GM12878 (cell line): ENCODE measurements at regions of chr7 and their contacts with region 1.

Region 1: GRCh38 chr7:43625453-43625852 is 42.5 kb downstream of the STK17A start:
- DNase-seq: no peak
- ATAC-seq: peak; percentile 88
- H3K4me3 ChIP-seq: no peak overlapping the region
- H3K27ac ChIP-seq: peak overlapping the region; percentile 25; the same call in 1 of the 2 replicates
- H3K4me1 ChIP-seq: peaks cover 28% of the 10 kb centered on the region
- H3K27me3 ChIP-seq: no peaks in the 10 kb centered on the region
- CTCF ChIP-seq: no peak
- EP300 ChIP-seq: peak; percentile 8 to 67; a peak in 3 of 4 replicates
- POLR2A ChIP-seq: no peak
- RAD21 ChIP-seq: no peak

Region 2: DNA sequence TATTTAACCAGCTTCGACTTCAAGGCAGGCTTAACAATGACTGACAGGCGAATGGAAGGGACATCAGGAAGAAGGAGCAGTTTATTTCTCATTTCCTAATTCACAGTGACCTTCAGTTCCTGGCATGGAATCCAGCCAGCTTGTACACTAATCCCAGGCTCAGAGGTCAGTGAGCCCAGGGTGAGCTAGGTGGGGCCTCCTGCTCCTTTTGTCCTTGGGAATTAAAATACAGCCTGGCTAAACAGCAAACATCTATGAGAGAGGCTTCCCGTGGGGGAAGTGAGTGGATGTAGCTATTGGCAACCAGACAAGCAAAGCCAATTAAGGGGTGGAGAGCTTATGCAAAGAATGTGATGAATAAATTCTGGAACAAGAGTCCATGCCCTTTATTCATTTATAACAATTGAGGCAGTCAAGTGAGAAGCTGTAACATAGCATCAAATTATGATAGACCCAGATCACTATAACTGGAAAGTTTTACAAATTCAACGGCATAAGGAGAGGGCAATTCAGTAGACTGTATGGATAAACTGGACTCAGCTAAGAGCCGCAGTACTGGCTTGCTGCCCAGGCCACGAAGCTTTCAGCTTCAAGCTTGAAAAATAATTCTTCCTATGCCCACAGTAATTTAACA is 14.5 kb after region 1 on chr7:
- CTCF ChIA-PET with region 1: interaction called, 12 read pairs
- POLR2A ChIA-PET with region 1: interaction called, 7 read pairs
- RAD21 ChIA-PET with region 1: interaction called, 13 read pairs
- SMC1A ChIA-PET with region 1: interaction called, 146 read pairs
- in situ Hi-C with region 1: no loop called
- intact Hi-C with region 1: no loop called
- DNase-seq: no peak
- ATAC-seq: no peak
- H3K4me3 ChIP-seq: no peak overlapping the region
- H3K27ac ChIP-seq: no peak overlapping the region
- H3K4me1 ChIP-seq: no peaks in the 10 kb centered on the region
- H3K27me3 ChIP-seq: no peaks in the 10 kb centered on the region
- CTCF ChIP-seq: no peak
- EP300 ChIP-seq: no peak
- POLR2A ChIP-seq: no peak
- RAD21 ChIP-seq: no peak